Posterior vena cava (tissue), 2 donors: ENCODE measurements at regions of chr4 and their contacts with region 1.

Region 1: DNA sequence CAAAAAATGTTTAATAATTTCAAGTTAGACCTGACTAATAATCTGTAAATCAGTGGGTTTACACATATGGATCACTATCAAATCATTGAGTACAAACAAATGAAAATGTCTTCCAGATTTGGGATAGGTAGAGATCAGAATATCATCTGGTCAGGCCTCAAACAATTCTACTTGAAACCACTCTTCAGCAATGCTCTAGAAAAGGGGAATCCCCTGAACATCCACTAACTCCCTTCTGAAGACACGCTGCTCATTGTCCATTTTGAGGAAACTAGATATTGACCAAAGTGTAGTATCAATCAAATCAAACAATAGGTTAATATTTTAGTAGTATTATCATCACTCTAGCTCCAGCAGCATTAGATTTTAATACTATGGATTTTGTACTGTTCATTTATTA is 46.3 kb downstream of the SULT1E1 start:
- DNase-seq: no peak

Region 2: DNA sequence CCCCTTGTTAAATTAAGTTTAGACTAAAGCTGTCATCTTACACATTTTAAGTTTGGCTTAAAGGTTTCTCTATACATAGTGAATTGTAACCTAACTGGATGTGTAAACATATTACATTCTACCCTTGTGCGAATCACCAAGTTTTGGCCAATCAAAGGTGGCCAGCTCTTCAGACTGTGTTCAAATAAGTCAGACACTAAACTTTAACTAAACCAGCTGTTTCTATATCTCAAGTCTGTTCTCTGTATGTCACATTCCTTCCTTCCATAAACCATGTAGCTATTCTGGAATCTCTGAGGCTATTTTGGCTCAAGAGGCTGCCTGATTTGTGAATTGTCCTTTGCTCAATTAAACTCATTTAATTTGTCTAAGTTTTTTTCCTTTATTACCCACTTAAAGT is 59.9 kb before region 1 on chr4:
- intact Hi-C with region 1: loop called in 1 of 2 experiments (anchors 2 kb)
- DNase-seq: no peak

Region 3: GRCh38 chr4:69861756-69862155 is 48.1 kb after region 1 on chr4:
- intact Hi-C with region 1: no loop called
- DNase-seq: no peak